Caco-2 (cell line): ENCODE measurements at regions of chr20 and their contacts with region 1.

Region 1: GRCh38 chr20:11544029-11544678 is 373.5 kb upstream of the BTBD3 start:
- DNase-seq: peak in 1 of 2 experiments; percentile 73
- H3K4me3 ChIP-seq: no peak overlapping the region
- H3K4me3 Mint-ChIP-seq: no peak overlapping the region
- H3K27ac Mint-ChIP-seq: no peak overlapping the region
- H3K4me1 ChIP-seq: peaks cover 13% of the 10 kb centered on the region
- H3K4me1 Mint-ChIP-seq: no peaks in the 10 kb centered on the region
- H3K27me3 ChIP-seq: no peaks in the 10 kb centered on the region
- H3K27me3 Mint-ChIP-seq: no peaks in the 10 kb centered on the region
- CTCF ChIP-seq: peak; percentile 48 to 73

Region 2: GRCh38 chr20:9978397-9979004 is 1565.7 kb before region 1 on chr20:
- CTCF ChIA-PET with region 1: no interaction called
- POLR2A ChIA-PET with region 1: no interaction called
- intact Hi-C with region 1: loop called (anchors 5 kb)
- DNase-seq: peak; percentile 40 to 60
- H3K4me3 ChIP-seq: no peak overlapping the region
- H3K4me3 Mint-ChIP-seq: no peak overlapping the region
- H3K27ac Mint-ChIP-seq: no peak overlapping the region
- H3K4me1 ChIP-seq: no peaks in the 10 kb centered on the region
- H3K4me1 Mint-ChIP-seq: no peaks in the 10 kb centered on the region
- H3K27me3 ChIP-seq: no peaks in the 10 kb centered on the region
- H3K27me3 Mint-ChIP-seq: peaks cover 2% of the 10 kb centered on the region
- CTCF ChIP-seq: peak; percentile 70 to 82

Region 3: GRCh38 chr20:11047559-11047958 is 496.6 kb before region 1 on chr20:
- CTCF ChIA-PET with region 1: no interaction called
- POLR2A ChIA-PET with region 1: no interaction called
- intact Hi-C with region 1: loop called (anchors 10 kb)
- DNase-seq: peak; percentile 41 to 74
- H3K4me3 ChIP-seq: no peak overlapping the region
- H3K4me3 Mint-ChIP-seq: no peak overlapping the region
- H3K27ac Mint-ChIP-seq: no peak overlapping the region
- H3K4me1 ChIP-seq: peaks cover 50% of the 10 kb centered on the region
- H3K4me1 Mint-ChIP-seq: peaks cover 23% of the 10 kb centered on the region
- H3K27me3 ChIP-seq: no peaks in the 10 kb centered on the region
- H3K27me3 Mint-ChIP-seq: no peaks in the 10 kb centered on the region
- CTCF ChIP-seq: no peak

Region 4: GRCh38 chr20:11274141-11274594 is 270.0 kb before region 1 on chr20:
- CTCF ChIA-PET with region 1: no interaction called
- POLR2A ChIA-PET with region 1: no interaction called
- intact Hi-C with region 1: loop called (anchors 1 kb)
- DNase-seq: peak; percentile 61 to 63
- H3K4me3 ChIP-seq: no peak overlapping the region
- H3K4me3 Mint-ChIP-seq: no peak overlapping the region
- H3K27ac Mint-ChIP-seq: no peak overlapping the region
- H3K4me1 ChIP-seq: peaks cover 21% of the 10 kb centered on the region
- H3K4me1 Mint-ChIP-seq: peaks cover 18% of the 10 kb centered on the region
- H3K27me3 ChIP-seq: no peaks in the 10 kb centered on the region
- H3K27me3 Mint-ChIP-seq: no peaks in the 10 kb centered on the region
- CTCF ChIP-seq: peak; percentile 73 to 77

Region 5: GRCh38 chr20:11438412-11438811 is 105.7 kb before region 1 on chr20:
- CTCF ChIA-PET with region 1: no interaction called
- POLR2A ChIA-PET with region 1: no interaction called
- intact Hi-C with region 1: loop called (anchors 1 kb)
- DNase-seq: no peak
- H3K4me3 ChIP-seq: no peak overlapping the region
- H3K4me3 Mint-ChIP-seq: no peak overlapping the region
- H3K27ac Mint-ChIP-seq: no peak overlapping the region
- H3K4me1 ChIP-seq: peaks cover 9% of the 10 kb centered on the region; the same call in 1 of the 2 replicates
- H3K4me1 Mint-ChIP-seq: peaks cover 4% of the 10 kb centered on the region
- H3K27me3 ChIP-seq: no peaks in the 10 kb centered on the region
- H3K27me3 Mint-ChIP-seq: no peaks in the 10 kb centered on the region
- CTCF ChIP-seq: no peak

Region 6: GRCh38 chr20:11861479-11861878 is 317.3 kb after region 1 on chr20:
- CTCF ChIA-PET with region 1: no interaction called
- POLR2A ChIA-PET with region 1: no interaction called
- intact Hi-C with region 1: no loop called
- DNase-seq: no peak
- H3K4me3 ChIP-seq: no peak overlapping the region
- H3K4me3 Mint-ChIP-seq: no peak overlapping the region
- H3K27ac Mint-ChIP-seq: no peak overlapping the region
- H3K4me1 ChIP-seq: no peaks in the 10 kb centered on the region
- H3K4me1 Mint-ChIP-seq: peaks cover 6% of the 10 kb centered on the region
- H3K27me3 ChIP-seq: no peaks in the 10 kb centered on the region
- H3K27me3 Mint-ChIP-seq: no peaks in the 10 kb centered on the region
- CTCF ChIP-seq: no peak